ENCODE measurements at regions of chr11 and their contacts with region 1.

Region 1: DNA sequence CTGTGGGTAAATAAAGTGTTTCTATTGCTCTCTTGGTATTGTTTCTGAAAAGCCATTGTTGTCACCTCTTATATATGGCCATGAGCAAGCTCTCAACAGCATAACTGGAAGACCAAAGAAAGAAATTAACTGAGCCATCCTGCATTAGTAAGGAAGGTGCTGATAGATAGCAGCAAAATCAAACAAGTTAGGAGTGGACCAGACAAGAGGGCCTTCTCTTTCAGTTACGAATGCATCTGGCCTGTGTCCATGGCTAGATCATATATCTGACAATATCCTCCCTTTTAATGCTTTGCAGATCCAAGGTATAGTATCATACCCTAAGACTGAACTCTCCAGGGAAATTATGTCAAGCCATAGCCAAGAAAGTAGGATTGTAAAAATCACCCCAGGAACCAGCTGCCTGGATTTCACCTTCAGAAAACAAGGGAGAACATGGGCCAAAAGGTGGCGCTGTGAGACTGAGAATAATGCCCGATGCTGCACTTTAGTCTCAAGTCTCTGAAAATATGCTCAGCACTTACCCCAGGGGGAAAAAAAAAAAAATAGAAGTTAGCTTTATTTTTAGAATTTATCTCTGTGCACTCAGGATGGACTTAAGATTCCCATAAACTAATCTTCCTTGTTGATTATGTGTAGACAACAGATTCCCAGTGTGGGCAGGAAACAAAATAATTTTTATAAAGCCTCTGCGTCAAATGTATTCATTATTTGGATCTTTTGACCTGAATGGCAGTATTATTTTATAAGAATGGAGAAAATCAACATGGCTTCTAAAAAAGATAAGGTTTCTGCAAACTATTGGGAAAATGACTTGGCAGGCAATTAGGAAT is 415.1 kb downstream of the ETS1 start:
- DNase-seq: peak; percentile 31 to 55
- ATAC-seq: peak; percentile 60 to 65
- H3K4me3 ChIP-seq: no peak overlapping the region
- H3K27ac ChIP-seq: no peak overlapping the region
- H3K4me1 ChIP-seq: no peaks in the 10 kb centered on the region
- H3K27me3 ChIP-seq: no peaks in the 10 kb centered on the region
- CTCF ChIP-seq: peak; percentile 61 to 76 (median 65)
- POLR2A ChIP-seq: no peak

Region 2: DNA sequence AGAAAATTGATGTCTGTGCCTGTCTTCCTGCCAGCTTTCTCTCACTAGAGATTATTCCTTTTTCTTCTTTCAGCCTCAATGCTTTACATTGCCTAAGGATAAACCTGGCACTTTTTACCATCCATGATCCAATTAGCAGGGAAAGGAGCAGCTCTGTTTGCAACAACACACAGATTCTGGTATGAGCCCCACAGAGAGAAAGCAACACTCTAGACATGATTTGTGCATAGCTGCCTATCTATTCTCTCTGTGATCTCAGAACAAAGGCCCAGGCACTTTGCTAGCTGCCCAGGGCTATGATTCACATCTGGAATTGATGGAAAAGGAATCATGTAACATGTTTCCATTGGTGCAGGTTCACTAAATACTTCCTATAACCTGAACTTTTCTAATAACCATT is 269.9 kb before region 1 on chr11:
- in situ Hi-C with region 1: no loop called
- intact Hi-C with region 1: no loop called
- DNase-seq: no peak
- ATAC-seq: no peak
- H3K4me3 ChIP-seq: no peak overlapping the region
- H3K27ac ChIP-seq: no peak overlapping the region
- H3K4me1 ChIP-seq: no peaks in the 10 kb centered on the region
- H3K27me3 ChIP-seq: no peaks in the 10 kb centered on the region
- CTCF ChIP-seq: no peak
- POLR2A ChIP-seq: no peak

Region 3: DNA sequence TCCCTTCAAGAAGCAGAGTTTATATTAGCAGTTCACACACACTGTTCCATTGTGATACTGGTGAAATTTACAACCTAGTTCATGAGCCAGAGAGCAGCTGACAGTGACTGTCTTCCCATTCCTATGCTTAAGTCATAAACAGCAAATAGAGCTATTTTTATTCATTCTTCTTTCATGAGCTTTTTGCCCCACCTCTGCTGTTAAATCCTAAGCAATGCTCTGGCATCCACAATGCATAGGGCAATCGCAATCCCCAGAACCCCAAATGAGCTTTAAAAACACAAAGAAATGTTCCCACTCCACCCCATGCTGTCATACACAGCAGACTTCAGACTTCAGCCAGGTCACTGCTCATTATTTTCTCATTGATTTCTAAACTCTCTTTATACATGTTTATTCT is 107.6 kb after region 1 on chr11:
- in situ Hi-C with region 1: loop called in 2 of 4 experiments (anchors 5 to 10 kb)
- intact Hi-C with region 1: no loop called
- DNase-seq: no peak
- ATAC-seq: peak; percentile 24 to 47
- H3K4me3 ChIP-seq: no peak overlapping the region
- H3K27ac ChIP-seq: no peak overlapping the region
- H3K4me1 ChIP-seq: no peaks in the 10 kb centered on the region
- H3K27me3 ChIP-seq: no peaks in the 10 kb centered on the region
- CTCF ChIP-seq: no peak
- POLR2A ChIP-seq: no peak

Region 4: DNA sequence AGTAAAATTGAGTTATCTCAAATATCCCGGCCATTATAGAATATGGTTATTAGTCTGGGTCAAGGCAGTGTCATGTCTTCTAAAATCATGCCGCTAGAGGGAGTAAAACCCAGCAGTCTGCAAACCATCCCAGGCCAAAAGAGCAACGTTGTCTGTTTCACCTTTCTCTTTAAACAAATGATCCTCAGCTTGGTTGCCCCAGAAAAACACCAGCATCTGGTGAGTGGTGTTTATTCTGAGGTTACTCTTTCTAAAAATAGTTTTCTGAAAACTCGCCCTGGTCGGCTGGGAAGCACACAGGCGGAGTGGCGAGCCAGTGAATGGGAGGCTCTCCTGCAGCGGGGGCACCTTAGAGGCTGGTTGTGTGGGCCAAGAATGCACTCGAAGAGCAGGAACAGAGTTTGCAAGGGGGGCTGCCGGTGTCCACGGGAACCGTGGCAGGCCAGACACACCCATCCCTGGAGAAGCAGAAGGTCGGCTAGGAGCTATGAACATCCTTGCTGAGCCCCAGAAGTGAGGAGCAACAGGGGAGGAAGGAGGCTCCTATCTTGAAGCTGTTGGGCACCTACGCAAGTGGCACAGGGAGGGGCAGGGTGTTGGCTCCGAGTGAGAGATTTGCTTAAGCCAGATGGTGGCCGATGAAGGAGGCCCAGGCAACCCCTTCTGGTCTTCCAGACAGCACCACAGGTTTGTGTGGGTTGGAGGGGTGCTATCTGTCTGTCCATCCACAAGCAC is 118.0 kb after region 1 on chr11:
- in situ Hi-C with region 1: loop called in 2 of 4 experiments (anchors 5 to 10 kb)
- intact Hi-C with region 1: no loop called
- DNase-seq: peak; percentile 35 to 47
- ATAC-seq: peak; percentile 96 to 97
- H3K4me3 ChIP-seq: peak overlapping the region; percentile 10 to 35 (median 20)
- H3K27ac ChIP-seq: peak overlapping the region; percentile 50 to 59 (median 53)
- H3K4me1 ChIP-seq: peaks cover 9% of the 10 kb centered on the region in 2 donors
- H3K27me3 ChIP-seq: no peaks in the 10 kb centered on the region
- CTCF ChIP-seq: peak; percentile 80 to 88 (median 85)
- POLR2A ChIP-seq: no peak

Region 5: GRCh38 chr11:128824191-128825049 is 652.2 kb after region 1 on chr11:
- in situ Hi-C with region 1: loop called in 1 of 4 experiments (anchors 10 kb)
- intact Hi-C with region 1: no loop called
- DNase-seq: no peak
- ATAC-seq: no peak
- H3K4me3 ChIP-seq: peak overlapping the region in 2 of 4 donors; percentile 4 to 20
- H3K27ac ChIP-seq: no peak overlapping the region
- H3K4me1 ChIP-seq: peaks cover 0 to 4% of the 10 kb centered on the region in 2 donors
- H3K27me3 ChIP-seq: peaks cover 0 to 2% (median 0%) of the 10 kb centered on the region in 3 donors
- CTCF ChIP-seq: no peak
- POLR2A ChIP-seq: no peak